ENCODE measurements at regions of chr11 and their contacts with region 1.

Region 1: DNA sequence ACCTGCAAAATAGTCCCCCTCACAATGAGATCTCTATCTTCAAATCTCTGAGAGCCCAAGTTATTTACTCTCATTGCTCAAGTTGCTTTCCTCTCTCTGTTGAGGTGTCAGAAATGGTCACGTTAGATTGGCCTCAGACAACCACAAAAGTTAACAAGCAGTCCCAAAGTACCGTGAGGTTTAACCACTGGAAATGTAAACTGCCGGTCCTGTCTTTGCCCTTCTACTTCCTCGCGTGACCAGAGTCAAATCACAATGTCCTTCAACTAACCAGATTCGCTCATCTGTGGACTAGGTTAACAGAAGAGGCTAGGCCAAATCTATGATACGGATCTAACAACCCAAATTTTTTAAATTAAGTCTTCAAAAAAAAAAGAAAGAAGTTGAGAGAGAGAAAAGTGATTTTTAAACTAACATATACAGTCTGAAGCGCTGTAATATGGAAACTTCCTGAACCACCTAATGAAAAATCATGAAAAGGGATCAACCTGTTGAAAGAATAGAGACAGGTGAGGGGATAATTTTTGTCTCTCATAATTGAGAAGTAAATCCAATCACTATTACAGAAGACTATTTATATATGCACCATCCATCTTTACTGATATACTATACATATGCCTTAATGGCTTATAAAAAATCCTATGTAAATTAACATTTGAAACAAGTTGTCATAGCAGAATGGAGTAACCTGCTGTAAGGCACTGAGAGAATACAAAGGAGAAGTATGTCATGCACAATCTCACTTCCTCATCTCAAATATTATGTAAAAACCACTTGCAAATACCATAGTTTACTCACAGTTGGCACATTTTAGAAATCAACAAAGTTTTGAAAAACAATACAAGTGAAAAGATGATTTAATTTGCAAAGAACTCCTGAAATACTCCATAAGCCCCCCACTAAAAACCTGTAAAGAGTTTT is 3.3 kb upstream of the JAML start:
- DNase-seq: no peak
- ATAC-seq: peak; percentile 73
- H3K4me3 Mint-ChIP-seq: peak overlapping the region; percentile 63
- H3K27ac Mint-ChIP-seq: peak overlapping the region; percentile 87
- H3K4me1 Mint-ChIP-seq: peaks cover 59% of the 10 kb centered on the region
- H3K27me3 Mint-ChIP-seq: peaks cover 6% of the 10 kb centered on the region
- CTCF ChIP-seq: no peak

Region 2: GRCh38 chr11:118251858-118252652 is 23.9 kb after region 1 on chr11 and contains the start of gene MPZL3:
- CTCF ChIA-PET with region 1: no interaction called
- POLR2A ChIA-PET with region 1: interaction called, 4 read pairs
- intact Hi-C with region 1: loop called (anchors 2 kb)
- DNase-seq: peak; percentile 72
- ATAC-seq: peak; percentile 76
- H3K4me3 Mint-ChIP-seq: peak within 1 kb of the TSS; percentile 98
- H3K27ac Mint-ChIP-seq: peak within 1 kb of the TSS; percentile 99
- H3K4me1 Mint-ChIP-seq: peaks cover 17% of the 10 kb centered on the region
- H3K27me3 Mint-ChIP-seq: peaks cover 21% of the 10 kb centered on the region
- CTCF ChIP-seq: no peak
- total RNA-seq, gene MPZL3: 2.9 and 3.7 TPM in 2 replicates